ENCODE measurements at regions of chr9 and their contacts with region 1.

Region 1: DNA sequence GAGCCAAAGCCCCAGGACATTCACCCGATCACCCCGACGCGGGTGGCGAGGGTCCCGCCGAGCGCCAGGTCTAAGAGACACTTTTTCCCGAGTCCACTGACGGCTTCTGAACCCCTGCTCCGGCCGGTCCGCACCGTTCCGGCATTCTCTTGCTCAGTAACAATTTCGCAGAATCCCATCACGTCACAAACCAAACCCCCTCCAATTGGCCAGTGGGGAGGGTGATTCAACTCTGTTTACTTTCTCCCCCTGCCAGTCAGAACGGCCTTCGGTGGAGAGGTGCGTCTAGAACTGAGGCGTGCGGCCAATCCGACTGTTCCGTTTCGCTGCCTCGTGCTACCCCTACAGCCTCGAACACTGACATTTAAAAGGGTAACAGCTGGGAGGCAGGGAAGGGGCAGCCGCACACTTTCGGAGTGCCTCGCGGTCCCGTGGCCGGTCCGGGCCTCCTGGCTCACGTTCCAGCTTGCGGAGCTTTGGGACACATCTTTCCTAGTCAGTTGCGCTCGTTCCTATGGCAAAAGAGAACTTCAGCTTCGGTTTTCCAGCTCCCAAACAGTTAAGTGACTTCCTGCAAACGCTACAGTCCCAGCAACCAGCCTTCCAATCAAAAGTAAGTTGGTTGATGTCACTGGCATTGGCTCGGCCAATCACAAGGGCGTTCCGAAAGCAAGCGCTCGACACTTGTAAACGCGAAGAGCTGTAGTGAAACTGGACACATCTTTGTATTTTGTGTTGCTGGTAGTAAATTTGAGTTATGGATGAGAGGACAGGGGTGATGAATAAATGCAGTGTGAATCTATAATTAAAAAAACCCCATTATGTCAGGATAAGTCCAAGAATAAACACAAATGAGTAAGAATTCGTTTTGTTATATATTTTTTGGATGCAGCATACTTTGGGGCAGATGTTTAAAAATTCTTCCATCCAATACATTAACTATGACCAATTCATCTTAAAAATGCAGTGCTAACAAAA is at the start of gene KLF9:
- DNase-seq: peak; percentile 93
- ATAC-seq: peak; percentile 72
- total RNA-seq, gene KLF9: 54.9 TPM

Region 2: GRCh38 chr9:70494221-70494620 is 80.1 kb after region 1 on chr9:
- intact Hi-C with region 1: no loop called
- DNase-seq: no peak
- ATAC-seq: peak; percentile 66

Region 3: GRCh38 chr9:70510157-70510770 is 96.2 kb after region 1 on chr9:
- intact Hi-C with region 1: no loop called
- DNase-seq: peak; percentile 63
- ATAC-seq: peak; percentile 53

Region 4: DNA sequence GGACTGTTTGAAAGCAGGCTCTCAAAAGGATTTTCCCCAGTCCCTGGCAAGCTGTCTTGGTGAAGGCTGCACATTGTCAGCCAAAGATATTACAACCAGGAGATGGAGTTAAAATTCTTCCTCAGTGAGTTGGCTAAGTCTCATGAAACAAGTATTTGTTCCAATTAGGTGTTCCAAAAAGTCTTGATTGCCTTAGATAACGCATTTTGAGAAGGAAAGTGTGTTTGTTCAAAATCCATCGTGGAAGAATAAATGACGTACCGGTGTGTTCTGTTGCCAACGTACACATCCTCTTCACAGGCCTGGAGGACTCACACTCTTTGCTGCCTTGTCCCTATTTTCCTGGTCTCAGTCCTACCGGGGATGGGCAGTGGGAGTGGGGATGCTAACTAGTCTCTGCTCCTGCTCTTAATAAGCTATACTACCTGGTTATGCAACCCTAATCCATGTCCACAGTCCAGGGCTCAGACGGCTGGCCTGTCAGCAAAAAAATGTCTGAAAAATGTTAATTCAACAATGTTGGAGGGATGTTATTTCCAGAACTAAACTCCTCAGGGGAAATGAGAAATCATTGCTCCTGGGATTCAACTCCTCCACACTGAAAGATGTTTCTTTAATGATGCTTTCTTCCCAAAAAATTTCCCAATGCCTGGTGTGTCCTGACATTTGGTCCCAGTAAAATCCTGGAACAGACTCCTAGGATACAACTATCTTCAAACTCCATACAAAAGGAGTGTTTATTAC is 175.7 kb after region 1 on chr9:
- intact Hi-C with region 1: loop called (anchors 10 kb)
- DNase-seq: peak; percentile 47
- ATAC-seq: peak; percentile 77

Measured in left ventricle myocardium superior (tissue), 1 donor.